OCI-LY7 (cell line): ENCODE measurements at regions of chr3 and their contacts with region 1.

Region 1: DNA sequence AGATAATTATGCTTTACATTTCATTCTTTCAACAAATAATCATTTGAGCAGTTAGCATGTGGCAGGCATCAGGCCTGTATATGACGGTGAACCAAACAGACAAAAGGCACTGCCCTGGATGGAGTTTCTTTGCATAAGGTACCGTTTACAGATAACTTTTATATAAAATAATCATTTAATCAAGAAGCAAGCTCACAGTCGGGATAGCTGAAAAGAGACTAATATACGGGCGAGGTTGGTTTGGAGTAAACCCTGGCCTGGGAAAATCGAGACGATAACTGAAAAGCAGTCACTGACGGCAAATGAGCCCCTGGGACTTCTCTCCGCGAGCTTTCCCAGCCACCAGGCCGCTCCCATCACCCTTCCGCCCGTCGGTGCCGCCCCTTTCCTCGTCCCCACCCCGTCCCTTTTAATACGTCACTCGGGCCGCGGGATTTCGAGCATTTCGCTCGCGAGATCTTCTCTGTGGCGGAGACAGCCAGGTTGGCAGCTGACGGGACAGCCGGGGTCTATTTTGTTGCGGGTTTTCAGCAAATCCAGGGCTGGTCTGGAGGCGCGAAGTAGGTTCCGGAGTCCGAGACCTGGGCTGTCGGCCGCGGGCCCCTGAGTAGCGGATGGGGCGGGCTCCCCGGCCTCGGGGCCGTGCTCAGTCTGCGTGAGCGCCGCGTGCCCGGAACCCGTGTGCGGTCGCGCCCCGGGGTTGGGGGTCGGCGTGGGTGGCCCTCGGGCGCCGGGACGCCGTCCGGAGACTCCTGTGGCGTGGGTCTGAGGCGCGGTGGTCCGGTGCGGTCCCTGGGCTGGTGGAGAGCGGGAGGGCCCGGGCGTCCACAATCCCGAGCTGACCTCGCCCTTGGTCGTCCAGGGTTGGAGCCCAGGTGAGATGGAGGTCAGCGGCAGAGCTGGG is at the start of gene NMD3:
- DNase-seq: peak; percentile 94
- H3K4me3 ChIP-seq: peak within 1 kb of the TSS; percentile 94
- H3K27ac ChIP-seq: peak within 1 kb of the TSS; percentile 52
- H3K4me1 ChIP-seq: peaks cover 20% of the 10 kb centered on the region
- CTCF ChIP-seq: no peak
- total RNA-seq, gene NMD3: 30.0 and 36.1 TPM in 2 replicates

Region 2: GRCh38 chr3:160449636-160450598 is 771.2 kb before region 1 on chr3 and contains the start of gene TRIM59:
- CTCF ChIA-PET with region 1: no interaction called
- POLR2A ChIA-PET with region 1: no interaction called
- intact Hi-C with region 1: loop called (anchors 10 kb)
- DNase-seq: peak; percentile 98
- H3K4me3 ChIP-seq: peak within 1 kb of the TSS; percentile 86
- H3K27ac ChIP-seq: peak within 1 kb of the TSS; percentile 88
- H3K4me1 ChIP-seq: peaks cover 21% of the 10 kb centered on the region
- CTCF ChIP-seq: no peak
- total RNA-seq, gene TRIM59: 26.1 and 28.7 TPM in 2 replicates

Region 3: DNA sequence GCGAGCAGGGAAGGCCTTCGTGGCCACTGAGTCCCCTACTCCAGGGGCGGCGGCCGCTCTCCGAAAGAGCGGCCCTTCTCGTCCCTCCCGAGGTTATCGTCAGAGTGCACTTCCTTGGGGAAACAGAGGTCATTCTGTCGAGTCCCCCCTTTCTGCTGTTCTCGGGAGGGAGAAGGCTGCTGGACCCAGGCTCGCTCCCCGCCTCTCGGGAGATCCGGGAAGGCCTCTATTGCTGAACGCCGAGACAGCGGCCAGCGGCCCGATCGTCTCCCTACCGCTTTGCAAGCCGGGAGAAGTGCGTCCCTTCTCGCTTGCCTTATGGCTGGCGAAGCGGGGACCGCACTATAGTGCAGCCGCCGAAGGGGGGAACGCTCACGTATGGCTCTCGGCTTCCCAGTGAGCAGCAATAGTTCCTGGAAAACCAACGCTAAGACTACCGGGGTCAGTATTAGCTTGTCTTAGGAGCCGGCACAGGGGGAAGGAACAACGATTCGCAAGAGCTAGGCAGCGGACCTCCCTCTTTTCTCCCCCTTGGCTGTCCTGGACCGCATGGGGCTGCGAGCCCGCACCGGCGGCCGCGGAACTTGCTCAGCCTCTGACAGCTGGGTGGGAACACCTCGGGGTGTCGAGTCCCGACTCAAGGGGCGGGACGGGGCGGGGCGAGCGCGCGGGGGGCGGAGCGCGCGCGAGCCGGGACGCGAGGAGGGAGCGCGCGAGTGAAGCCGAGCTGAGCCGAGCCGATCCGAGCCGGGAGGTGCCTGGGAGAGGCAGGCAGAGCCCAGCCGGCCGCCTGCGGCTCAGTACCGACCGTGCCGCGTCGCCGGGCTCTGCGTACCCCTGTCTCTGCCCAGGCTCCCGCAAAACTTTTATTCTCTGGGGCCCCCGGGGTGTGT is 466.0 kb before region 1 on chr3:
- CTCF ChIA-PET with region 1: no interaction called
- POLR2A ChIA-PET with region 1: interaction called, 6 read pairs
- intact Hi-C with region 1: loop called (anchors 2 kb)
- DNase-seq: peak; percentile 95
- H3K4me3 ChIP-seq: peak overlapping the region; percentile 84
- H3K27ac ChIP-seq: peak overlapping the region; percentile 69
- H3K4me1 ChIP-seq: peaks cover 26% of the 10 kb centered on the region
- CTCF ChIP-seq: no peak

Region 4: GRCh38 chr3:161081633-161082032 is 139.5 kb before region 1 on chr3:
- CTCF ChIA-PET with region 1: no interaction called
- POLR2A ChIA-PET with region 1: interaction called, 5 read pairs
- intact Hi-C with region 1: loop called (anchors 5 kb)
- DNase-seq: no peak
- H3K4me3 ChIP-seq: no peak overlapping the region
- H3K27ac ChIP-seq: no peak overlapping the region
- H3K4me1 ChIP-seq: peaks cover 24% of the 10 kb centered on the region
- CTCF ChIP-seq: no peak

Region 5: GRCh38 chr3:161254861-161255260 is 33.8 kb after region 1 on chr3:
- CTCF ChIA-PET with region 1: no interaction called
- POLR2A ChIA-PET with region 1: interaction called, 3 read pairs
- intact Hi-C with region 1: loop called (anchors 5 kb)
- DNase-seq: no peak
- H3K4me3 ChIP-seq: no peak overlapping the region
- H3K27ac ChIP-seq: no peak overlapping the region
- H3K4me1 ChIP-seq: no peaks in the 10 kb centered on the region
- CTCF ChIP-seq: no peak